ENCODE measurements at regions of chr2 and their contacts with region 1.

Region 1: DNA sequence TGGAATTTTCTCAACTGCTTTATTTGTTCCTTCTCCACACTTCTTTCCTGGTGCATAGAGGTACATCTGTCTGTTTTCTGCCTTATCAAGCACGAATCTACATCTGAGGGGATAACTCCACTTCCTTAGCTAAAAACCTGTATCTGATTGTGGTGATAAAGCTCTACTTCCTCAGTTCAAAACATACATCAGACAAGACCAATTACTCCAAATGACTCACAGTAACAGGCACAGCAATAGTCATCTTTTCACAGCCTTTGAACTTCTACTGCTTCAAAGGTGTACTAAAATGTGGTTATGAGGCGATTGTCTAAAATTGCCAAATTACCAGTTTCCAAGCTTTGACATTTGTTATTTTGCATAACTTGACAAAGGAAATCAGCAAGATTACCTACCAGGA is 803.6 kb upstream of the ZEB2 start:
- DNase-seq: no peak
- ATAC-seq: peak; percentile 98
- H3K4me3 Mint-ChIP-seq: no peak overlapping the region
- H3K27ac Mint-ChIP-seq: no peak overlapping the region
- H3K4me1 Mint-ChIP-seq: peaks cover 17% of the 10 kb centered on the region
- H3K27me3 Mint-ChIP-seq: peaks cover 6% of the 10 kb centered on the region

Region 2: DNA sequence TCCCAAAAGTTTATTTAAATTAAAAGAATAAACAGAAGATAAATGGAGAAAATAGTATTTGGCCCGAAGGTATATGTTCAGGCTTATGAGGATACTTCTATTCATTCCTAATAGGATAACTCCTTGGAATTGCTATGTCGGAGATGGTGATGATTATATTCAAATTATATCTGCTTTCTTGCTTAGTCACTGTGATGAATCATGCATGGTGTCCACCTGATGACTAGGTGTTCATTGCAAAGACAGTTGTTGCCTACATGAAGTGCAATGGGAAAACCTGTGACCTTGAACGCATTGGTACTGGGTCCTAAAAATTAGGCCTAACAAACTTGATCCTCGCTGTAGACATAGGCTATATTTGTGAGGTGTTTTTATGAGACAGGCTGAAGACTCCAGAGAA is 186.3 kb before region 1 on chr2:
- CTCF ChIA-PET with region 1: no interaction called
- POLR2A ChIA-PET with region 1: no interaction called
- intact Hi-C with region 1: no loop called
- DNase-seq: no peak
- ATAC-seq: no peak
- H3K4me3 Mint-ChIP-seq: no peak overlapping the region
- H3K27ac Mint-ChIP-seq: no peak overlapping the region
- H3K4me1 Mint-ChIP-seq: no peaks in the 10 kb centered on the region
- H3K27me3 Mint-ChIP-seq: no peaks in the 10 kb centered on the region

Region 3: DNA sequence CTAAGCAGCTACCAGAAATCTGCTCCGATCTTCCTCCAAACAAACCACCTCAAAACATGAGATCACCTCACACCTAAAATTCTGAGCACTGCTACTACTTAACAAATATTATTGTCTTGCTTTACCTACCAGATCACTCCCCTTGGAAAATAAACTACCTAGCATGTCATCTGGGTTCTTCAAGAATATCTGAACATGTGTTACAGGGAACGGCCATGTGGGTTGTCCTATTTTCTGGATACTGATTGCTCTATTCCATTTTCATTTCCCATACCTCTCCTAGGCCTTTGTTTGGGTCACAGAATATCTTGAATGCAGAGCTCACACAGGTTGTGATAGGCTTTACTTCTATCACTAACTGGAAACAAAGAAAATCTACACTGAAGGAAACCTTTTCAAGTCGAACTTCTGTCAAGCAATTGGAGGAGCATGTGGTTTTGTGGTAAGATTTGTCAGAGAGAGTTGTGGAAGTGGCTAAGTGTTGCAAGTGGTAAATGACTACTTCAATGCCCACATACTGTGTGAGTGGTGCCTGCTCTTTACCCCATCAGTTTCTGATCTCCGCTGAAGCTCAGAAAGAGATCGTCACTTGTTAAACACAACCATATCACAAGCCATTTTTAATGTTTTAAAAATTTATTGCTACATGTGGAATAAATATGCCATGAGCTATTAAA is 64.5 kb before region 1 on chr2:
- CTCF ChIA-PET with region 1: no interaction called
- POLR2A ChIA-PET with region 1: no interaction called
- intact Hi-C with region 1: loop called in 1 of 2 experiments (anchors 1 kb)
- DNase-seq: peak; percentile 20
- ATAC-seq: peak; percentile 74
- H3K4me3 Mint-ChIP-seq: no peak overlapping the region
- H3K27ac Mint-ChIP-seq: no peak overlapping the region
- H3K4me1 Mint-ChIP-seq: peaks cover 11% of the 10 kb centered on the region
- H3K27me3 Mint-ChIP-seq: peaks cover 29% of the 10 kb centered on the region

Region 4: GRCh38 chr2:145411493-145411892 is 88.0 kb after region 1 on chr2:
- CTCF ChIA-PET with region 1: no interaction called
- POLR2A ChIA-PET with region 1: no interaction called
- intact Hi-C with region 1: loop called in 1 of 2 experiments (anchors 1 kb)
- DNase-seq: peak; percentile 25
- ATAC-seq: peak; percentile 86
- H3K4me3 Mint-ChIP-seq: no peak overlapping the region
- H3K27ac Mint-ChIP-seq: no peak overlapping the region
- H3K4me1 Mint-ChIP-seq: peaks cover 13% of the 10 kb centered on the region
- H3K27me3 Mint-ChIP-seq: peaks cover 16% of the 10 kb centered on the region

Region 5: GRCh38 chr2:145623136-145623535 is 299.6 kb after region 1 on chr2:
- CTCF ChIA-PET with region 1: no interaction called
- POLR2A ChIA-PET with region 1: no interaction called
- intact Hi-C with region 1: no loop called
- DNase-seq: no peak
- ATAC-seq: no peak
- H3K4me3 Mint-ChIP-seq: no peak overlapping the region
- H3K27ac Mint-ChIP-seq: no peak overlapping the region
- H3K4me1 Mint-ChIP-seq: no peaks in the 10 kb centered on the region
- H3K27me3 Mint-ChIP-seq: no peaks in the 10 kb centered on the region

Region 6: GRCh38 chr2:145752091-145752806 is 428.7 kb after region 1 on chr2:
- CTCF ChIA-PET with region 1: no interaction called
- POLR2A ChIA-PET with region 1: no interaction called
- intact Hi-C with region 1: loop called in 1 of 2 experiments (anchors 5 kb)
- DNase-seq: no peak
- ATAC-seq: no peak
- H3K4me3 Mint-ChIP-seq: no peak overlapping the region
- H3K27ac Mint-ChIP-seq: no peak overlapping the region
- H3K4me1 Mint-ChIP-seq: peaks cover 11% of the 10 kb centered on the region
- H3K27me3 Mint-ChIP-seq: peaks cover 6% of the 10 kb centered on the region